ENCODE measurements at regions of chr19 and their contacts with region 1.

Region 1: GRCh38 chr19:925526-926322 is at the start of gene ARID3A:
- DNase-seq: peak; percentile 82 to 89
- ATAC-seq: peak; percentile 81 to 88 (median 82)
- H3K4me3 ChIP-seq: peak within 1 kb of the TSS; percentile 94
- H3K27ac ChIP-seq: peak within 1 kb of the TSS; percentile 74
- H3K4me1 ChIP-seq: no peaks in the 10 kb centered on the region
- H3K27me3 ChIP-seq: peaks cover 0 to 8% (median 0%) of the 10 kb centered on the region in 3 donors
- CTCF ChIP-seq: no peak
- total RNA-seq, gene ARID3A: 4.2 to 6.7 (median 4.9) TPM

Region 2: DNA sequence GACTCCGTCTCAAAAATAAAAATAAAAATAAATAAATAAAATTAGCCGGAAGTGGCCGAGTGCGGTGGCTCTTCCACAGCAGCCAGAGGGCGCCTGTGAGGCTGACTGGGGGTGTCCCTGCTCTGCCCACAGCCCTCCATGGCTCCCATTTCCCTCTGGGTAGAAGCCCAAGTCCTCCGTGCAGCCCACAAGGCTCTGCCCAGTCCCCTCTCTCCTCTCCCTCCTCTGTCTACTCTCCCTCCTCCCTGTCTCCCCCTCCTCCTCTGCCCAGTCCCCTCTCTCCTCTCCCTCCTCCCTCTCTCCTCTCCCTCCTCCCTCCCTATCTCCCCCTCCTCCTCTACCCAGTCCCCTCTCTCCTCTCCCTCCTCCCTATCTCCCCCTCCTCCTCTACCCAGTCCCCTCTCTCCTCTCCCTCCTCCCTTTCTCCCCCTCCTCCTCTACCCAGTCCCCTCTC is 154.4 kb before region 1 on chr19:
- intact Hi-C with region 1: loop called (anchors 1 to 5 kb)
- DNase-seq: peak in 1 of 2 donors; percentile 72
- ATAC-seq: peak in 3 of 4 donors; percentile 36 to 60 (median 51)
- H3K4me3 ChIP-seq: no peak overlapping the region
- H3K27ac ChIP-seq: no peak overlapping the region
- H3K4me1 ChIP-seq: no peaks in the 10 kb centered on the region
- H3K27me3 ChIP-seq: peaks cover 0 to 5% (median 0%) of the 10 kb centered on the region in 3 donors
- CTCF ChIP-seq: peak; percentile 53

Region 3: DNA sequence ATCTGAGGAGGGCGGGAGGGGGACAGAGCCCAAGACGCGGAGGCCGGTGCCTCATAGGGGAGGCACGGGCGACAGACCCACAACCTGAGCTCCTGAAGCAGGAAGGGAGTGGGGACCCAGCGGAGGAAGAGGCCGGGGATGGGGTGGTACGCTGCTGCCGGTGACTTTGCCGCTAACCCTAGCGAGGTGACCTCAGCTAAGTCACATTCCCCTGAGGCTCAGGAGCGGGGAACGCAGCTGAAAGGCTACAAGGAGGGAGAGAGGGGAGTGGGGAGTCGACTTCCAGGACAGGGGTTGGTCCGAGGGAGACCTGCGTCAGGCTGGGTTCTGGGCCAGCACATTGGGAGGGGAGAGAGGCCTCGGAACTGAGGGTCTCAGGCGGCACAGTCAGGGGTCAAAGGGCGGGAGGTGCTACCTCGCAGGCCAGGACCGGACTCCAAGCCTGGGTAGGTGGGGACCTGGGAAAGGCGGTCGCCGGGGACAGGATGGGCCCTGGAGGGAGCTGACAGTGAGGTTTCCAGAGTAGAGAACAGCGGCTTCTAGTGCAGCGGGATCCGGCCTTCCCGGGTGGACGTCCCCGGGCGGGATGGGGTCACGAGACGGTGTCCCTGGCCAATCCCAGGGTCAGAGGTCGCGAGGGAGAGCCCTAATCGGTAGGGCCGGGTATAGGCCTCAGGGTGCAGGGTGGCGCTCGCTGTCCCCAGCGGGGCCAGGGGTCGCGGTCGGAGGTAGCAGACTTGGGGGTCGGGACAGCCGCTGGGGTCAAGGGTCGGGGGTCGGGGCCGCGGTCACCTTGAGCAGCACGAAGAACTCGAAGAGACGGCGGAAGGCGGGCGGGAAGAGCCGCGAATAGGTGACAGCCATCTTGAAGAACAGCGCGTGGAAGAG is 94.5 kb after region 1 on chr19:
- intact Hi-C with region 1: no loop called
- DNase-seq: peak in 1 of 2 donors; percentile 79
- ATAC-seq: no peak
- H3K4me3 ChIP-seq: peak overlapping the region; percentile 88
- H3K27ac ChIP-seq: peak overlapping the region; percentile 94
- H3K4me1 ChIP-seq: peaks cover 46% of the 10 kb centered on the region
- H3K27me3 ChIP-seq: no peaks in the 10 kb centered on the region
- CTCF ChIP-seq: no peak

Region 4: GRCh38 chr19:1161716-1162115 is 236.0 kb after region 1 on chr19:
- intact Hi-C with region 1: no loop called
- DNase-seq: peak; percentile 82 to 91
- ATAC-seq: peak; percentile 84 to 86 (median 85)
- H3K4me3 ChIP-seq: peak overlapping the region; percentile 46
- H3K27ac ChIP-seq: peak overlapping the region; percentile 71
- H3K4me1 ChIP-seq: peaks cover 16% of the 10 kb centered on the region
- H3K27me3 ChIP-seq: no peaks in the 10 kb centered on the region
- CTCF ChIP-seq: no peak

Region 5: DNA sequence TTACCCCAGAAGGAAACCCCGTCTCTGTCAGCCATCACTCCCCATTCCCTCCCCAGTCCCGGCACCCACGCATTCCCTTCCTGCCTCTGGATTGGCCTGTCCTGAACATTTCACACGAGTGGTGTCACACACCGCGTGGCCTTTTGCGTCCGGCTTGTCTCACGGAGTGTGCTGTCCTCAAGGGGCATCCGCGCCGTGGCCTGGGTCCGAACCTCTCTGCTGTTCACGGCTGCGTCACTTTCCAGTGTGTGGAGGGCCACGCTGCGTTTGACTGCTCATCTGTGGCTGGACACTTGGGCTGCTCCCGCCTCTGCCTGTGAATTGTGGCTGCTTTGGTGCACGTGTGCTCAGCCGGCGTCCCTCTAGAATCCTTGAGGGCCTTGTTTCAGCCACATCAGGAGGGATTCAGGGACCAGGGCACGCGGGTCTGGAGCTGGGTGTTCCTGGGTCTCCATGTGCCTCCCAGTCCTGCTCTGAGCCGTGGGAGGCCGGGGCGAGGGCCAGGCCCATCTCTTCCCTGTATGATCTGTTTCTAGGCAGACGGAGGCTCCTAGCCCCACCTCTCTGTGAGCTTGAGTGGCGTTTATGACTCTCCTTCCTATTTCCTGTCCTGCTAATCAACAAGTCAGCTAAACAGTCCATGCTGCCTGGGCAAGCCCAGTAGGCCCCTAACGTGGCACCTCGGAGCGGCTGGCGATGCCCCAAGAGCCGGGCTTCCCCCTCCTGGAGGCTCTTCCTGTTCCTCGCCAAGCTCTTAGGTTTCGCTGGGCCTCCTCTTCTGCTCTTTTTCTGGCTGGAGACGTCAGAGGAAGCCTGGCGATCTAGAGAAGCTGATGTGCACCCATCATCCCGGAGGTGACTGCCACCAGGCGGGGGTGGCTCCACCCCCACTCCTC is 287.9 kb after region 1 on chr19:
- intact Hi-C with region 1: loop called in 1 of 2 experiments (anchors 10 kb)
- DNase-seq: peak; percentile 80 to 93
- ATAC-seq: peak; percentile 50 to 63 (median 56)
- H3K4me3 ChIP-seq: peak overlapping the region; percentile 60
- H3K27ac ChIP-seq: peak overlapping the region; percentile 99
- H3K4me1 ChIP-seq: peaks cover 95% of the 10 kb centered on the region
- H3K27me3 ChIP-seq: no peaks in the 10 kb centered on the region
- CTCF ChIP-seq: no peak